ENCODE measurements at regions of chr17 and their contacts with region 1.

Region 1: DNA sequence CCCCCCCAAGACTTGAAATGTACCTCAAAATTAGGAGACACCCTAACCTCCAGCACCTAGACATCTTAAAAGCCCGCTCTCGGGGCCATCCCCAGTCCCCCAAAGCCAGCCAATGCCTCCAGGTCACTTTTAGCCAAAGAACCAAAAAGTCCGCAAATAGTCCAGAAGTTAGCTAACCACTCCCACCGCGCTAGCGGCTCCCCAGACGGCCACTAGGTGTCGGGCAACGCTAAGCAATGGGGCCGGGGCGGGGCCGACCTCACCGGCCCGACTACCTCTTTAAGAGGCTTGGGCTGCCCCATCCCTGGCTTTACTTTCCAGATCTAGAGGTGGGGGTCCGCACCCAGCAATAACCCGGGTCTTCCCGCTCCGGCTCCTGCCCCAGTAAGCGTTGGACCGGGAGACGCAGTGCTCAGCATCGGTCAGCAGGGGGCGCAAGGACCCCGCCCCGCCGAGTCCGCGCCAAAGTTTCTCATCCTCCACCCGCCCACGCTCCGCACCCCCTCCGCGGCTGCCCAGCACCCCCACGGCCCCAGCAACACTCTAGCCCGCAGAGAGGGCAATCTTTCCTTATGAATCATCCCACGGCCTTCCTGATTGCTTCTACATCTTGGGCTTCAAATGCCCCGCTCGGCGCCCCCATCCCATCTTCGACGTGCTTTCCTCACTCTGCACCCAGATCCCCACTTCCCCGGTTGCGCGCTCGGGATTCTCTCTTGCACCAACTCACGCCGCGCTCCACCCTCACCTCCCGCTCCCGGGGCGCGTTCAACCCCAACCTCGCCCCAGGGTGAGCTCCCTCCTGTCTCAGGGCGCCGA is 765 bp downstream of the COL1A1 start:
- DNase-seq: peak; percentile 93
- ATAC-seq: peak; percentile 83

Region 2: DNA sequence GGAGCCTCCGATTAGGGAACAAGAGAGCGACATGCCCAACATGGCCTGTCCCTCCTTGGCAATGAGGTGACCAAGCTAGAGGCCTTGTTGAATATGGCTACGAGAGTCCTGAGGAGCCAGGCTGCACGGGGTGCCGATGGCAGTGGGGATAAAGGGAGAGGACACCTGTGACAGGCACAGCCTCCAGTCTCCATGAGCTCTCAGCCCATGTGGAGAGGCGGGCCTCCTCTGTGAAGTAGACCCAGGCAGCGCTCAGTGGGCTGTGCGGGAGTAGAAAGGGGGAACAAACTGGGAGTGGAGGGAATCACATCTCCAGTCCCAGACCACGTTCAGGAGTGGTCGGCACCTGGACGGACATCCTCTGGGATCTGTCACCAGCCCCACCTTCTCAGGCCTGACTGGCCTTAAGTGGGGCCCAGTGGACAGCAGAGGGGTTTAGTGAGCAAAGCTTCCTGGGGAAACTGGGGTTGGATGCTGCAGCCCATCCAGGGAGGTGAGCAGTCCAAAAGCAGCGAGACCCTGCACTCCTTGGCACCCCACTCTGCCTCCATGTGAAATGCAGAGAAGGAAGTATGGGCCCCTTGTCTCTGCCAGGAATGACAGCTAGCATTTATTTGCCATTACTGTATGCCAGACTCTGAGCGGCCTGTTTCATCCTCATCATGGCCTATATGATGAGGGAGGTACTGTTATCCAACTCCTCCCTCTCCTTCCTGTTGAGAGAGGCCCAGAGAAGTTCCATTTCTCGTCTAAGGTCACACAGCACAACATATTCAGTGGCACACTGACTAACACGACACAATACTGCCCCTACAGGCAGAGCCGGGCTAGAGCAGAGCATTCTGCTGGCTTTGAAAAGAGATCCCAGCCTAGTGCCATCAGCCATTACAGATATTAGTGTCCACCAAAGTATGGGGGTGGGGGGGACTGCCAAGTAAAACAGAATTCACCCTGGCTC is 69.1 kb after region 1 on chr17:
- intact Hi-C with region 1: loop called (anchors 5 kb)
- DNase-seq: peak; percentile 78
- ATAC-seq: peak; percentile 74